Heart left ventricle (tissue), 16 donors: ENCODE measurements at regions of chr1 and their contacts with region 1.

Region 1: GRCh38 chr1:7808253-7808844 is 24.3 kb downstream of the PER3 start:
- DNase-seq: no peak
- ATAC-seq: no peak
- H3K4me3 ChIP-seq: no peak overlapping the region
- H3K27ac ChIP-seq: no peak overlapping the region
- H3K4me1 ChIP-seq: no peaks in the 10 kb centered on the region
- H3K27me3 ChIP-seq: no peaks in the 10 kb centered on the region
- CTCF ChIP-seq: peak; percentile 10 to 51 (median 36)
- POLR2A ChIP-seq: no peak

Region 2: GRCh38 chr1:7755448-7755847 is 52.9 kb before region 1 on chr1:
- intact Hi-C with region 1: no loop called
- DNase-seq: no peak
- ATAC-seq: no peak
- H3K4me3 ChIP-seq: no peak overlapping the region
- H3K27ac ChIP-seq: no peak overlapping the region
- H3K4me1 ChIP-seq: peaks cover 0 to 19% (median 0%) of the 10 kb centered on the region in 12 donors
- H3K27me3 ChIP-seq: no peaks in the 10 kb centered on the region
- CTCF ChIP-seq: no peak
- POLR2A ChIP-seq: no peak

Region 3: DNA sequence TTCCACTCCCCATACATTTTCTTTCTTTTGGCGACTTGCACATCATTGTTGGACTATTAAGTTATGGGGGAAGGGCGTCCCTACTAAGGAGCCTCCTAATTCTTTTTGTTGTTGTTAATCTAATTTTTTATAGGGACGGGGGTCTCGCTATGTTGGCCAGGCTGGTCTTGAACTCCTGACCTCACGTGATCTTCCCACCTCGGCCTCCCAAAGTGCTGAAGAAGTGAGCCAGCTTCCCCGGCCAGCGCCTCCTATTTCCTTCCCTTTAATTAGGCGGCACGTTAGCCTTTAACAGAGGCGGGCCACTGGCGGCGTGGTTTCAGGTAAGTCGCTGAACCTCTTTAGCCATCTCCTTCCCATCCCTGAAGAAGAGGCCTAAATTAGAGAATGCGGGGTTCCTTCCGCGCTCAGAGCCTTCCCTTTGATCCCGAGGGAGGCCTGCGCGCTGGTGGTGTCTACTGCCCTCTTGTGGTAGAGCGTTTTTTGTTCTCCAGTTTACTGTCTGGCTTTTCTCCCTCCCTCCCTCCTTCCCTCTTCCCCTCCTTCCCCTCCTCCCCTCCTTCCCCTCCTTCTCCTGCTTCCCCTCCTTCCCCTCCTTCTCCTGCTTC is 94.2 kb after region 1 on chr1:
- intact Hi-C with region 1: loop called in 1 of 10 experiments (anchors 10 kb)
- DNase-seq: peak; percentile 40 to 77 (median 53)
- ATAC-seq: peak; percentile 47 to 85 (median 76)
- H3K4me3 ChIP-seq: peak overlapping the region in 8 of 12 donors; percentile 4 to 44 (median 29)
- H3K27ac ChIP-seq: no peak overlapping the region
- H3K4me1 ChIP-seq: peaks cover 0 to 4% (median 0%) of the 10 kb centered on the region in 12 donors
- H3K27me3 ChIP-seq: no peaks in the 10 kb centered on the region
- CTCF ChIP-seq: peak; percentile 48 to 73 (median 62)
- POLR2A ChIP-seq: no peak